AG04449 (cell line): ENCODE measurements at regions of chr3 and their contacts with region 1.

Region 1: GRCh38 chr3:156674046-156674910 is at the start of gene TIPARP:
- DNase-seq: peak; percentile 77
- H3K4me3 ChIP-seq: peak within 1 kb of the TSS; percentile 78
- CTCF ChIP-seq: peak; percentile 73

Region 2: DNA sequence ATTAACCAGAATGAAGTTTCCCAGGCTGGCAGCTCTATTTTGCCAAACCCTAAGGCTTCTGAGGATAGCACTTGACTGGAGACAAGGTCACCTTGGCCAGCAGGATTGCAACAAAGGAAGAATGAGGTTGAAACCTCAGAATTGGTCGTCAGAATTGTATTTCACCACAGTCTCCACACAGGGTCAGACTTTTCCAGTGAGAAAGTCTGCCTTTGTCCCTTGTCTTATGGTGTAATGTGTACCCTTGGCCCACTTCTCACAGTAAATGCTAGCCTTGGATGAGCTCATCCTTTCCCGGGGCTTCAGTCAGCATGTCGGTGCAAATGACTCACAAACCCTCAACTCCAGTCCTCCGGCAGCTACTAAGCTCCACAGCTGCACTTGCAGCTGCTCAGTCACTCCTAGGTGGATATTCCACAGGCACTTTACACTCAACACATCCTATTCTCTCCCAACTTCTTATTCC is 139.1 kb before region 1 on chr3:
- CTCF ChIA-PET with region 1: interaction called, 13 read pairs
- POLR2A ChIA-PET with region 1: interaction called, 8 read pairs
- DNase-seq: peak; percentile 97
- H3K4me3 ChIP-seq: no peak overlapping the region
- CTCF ChIP-seq: peak; percentile 29

Region 3: GRCh38 chr3:156547637-156548036 is 126.6 kb before region 1 on chr3:
- CTCF ChIA-PET with region 1: interaction called, 13 read pairs
- POLR2A ChIA-PET with region 1: interaction called, 60 read pairs
- DNase-seq: no peak
- H3K4me3 ChIP-seq: no peak overlapping the region
- CTCF ChIP-seq: no peak

Region 4: GRCh38 chr3:156554842-156555687 is 119.2 kb before region 1 on chr3 and contains the start of gene SSR3:
- CTCF ChIA-PET with region 1: interaction called, 13 read pairs
- POLR2A ChIA-PET with region 1: interaction called, 60 read pairs
- DNase-seq: peak; percentile 97
- H3K4me3 ChIP-seq: peak within 1 kb of the TSS; percentile 71
- CTCF ChIP-seq: no peak

Region 5: GRCh38 chr3:156689589-156689988 is 15.3 kb after region 1 on chr3:
- CTCF ChIA-PET with region 1: interaction called, 16 read pairs
- POLR2A ChIA-PET with region 1: no interaction called
- DNase-seq: no peak
- H3K4me3 ChIP-seq: no peak overlapping the region; the same call in 1 of the 2 replicates
- CTCF ChIP-seq: no peak